Right ventricle myocardium inferior (tissue), 1 donor: ENCODE measurements at regions of chr1 and their contacts with region 1.

Region 1: DNA sequence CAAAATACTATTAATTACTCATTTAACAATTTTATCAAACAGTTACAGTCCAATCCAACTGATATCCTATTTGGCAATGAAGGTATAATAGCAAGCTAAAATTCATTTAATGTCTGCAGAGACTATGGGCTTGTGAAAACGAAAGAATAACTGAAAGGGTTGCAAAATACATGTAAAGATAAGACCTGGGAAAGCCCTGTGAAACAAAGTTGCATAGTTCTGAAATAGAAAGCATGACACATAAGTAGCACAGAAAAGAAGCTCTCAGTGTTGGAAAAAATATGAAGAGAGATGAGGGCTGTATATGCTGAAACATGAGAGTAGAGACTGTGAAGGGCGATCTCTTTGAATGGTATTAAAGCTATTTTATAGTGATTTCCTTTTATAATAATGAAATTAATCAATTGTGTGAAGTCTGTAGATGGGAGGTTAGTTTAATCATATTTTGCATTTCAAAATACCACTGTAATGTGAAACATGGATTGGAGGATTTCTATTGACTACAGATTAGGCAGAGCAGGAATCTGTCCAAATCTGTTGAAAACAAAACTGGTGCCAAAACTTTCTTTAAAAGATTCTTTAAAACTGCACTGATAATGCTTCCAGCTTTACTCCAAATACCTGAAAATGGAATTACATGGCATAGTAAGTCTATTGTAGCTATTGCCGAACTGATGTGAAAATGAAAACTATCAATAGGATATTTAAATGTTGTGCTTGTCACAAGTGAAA is 1518.9 kb upstream of the B3GALT2 start:
- DNase-seq: no peak
- ATAC-seq: no peak

Region 2: DNA sequence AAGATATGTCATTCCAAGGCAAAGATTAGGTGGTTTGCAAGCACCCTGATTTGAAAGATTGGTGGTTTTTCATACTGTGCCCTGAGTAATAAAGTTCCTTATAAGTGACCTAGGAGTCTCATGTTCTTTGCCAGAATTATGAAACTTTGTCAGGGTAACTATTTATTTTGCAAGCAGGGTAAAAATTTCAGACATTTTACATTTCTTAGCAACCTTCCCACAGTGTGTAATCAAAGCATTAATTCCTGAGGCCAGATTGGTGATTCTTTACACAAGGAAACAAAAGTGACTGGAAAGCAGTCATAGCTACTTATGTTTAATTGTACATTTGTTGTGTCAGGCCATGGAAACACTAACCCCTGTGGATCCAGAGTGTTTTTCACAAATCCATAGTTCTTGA is 520.9 kb before region 1 on chr1:
- intact Hi-C with region 1: no loop called
- DNase-seq: no peak
- ATAC-seq: no peak

Region 3: DNA sequence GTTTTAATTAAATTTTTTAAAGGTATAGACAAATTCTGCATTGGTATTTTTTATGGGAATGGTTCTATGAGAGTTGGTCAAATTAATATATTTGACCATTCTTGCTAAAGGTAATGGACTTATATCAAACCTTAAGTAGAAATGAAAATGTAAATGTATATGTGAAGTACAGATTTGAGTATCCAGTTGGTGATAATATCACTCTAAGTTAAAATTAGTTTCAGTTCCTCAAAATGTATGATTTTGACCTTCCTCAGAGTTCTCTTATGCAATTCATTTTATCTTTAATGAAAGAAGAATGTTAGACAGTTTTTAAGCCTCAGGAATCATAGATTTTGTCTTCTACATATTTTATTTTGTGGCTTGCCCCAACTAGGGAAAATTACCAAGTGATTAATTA is 227.4 kb before region 1 on chr1:
- intact Hi-C with region 1: loop called (anchors 10 kb)
- DNase-seq: no peak
- ATAC-seq: no peak

Region 4: GRCh38 chr1:194723067-194723466 is 17.8 kb after region 1 on chr1:
- intact Hi-C with region 1: no loop called
- DNase-seq: no peak
- ATAC-seq: no peak